Calu3 (cell line): ENCODE measurements at regions of chr18 and their contacts with region 1.

Region 1: GRCh38 chr18:24395049-24395795 is 2.4 kb downstream of the OSBPL1A start:
- DNase-seq: no peak
- H3K4me3 Mint-ChIP-seq: no peak overlapping the region
- H3K27ac Mint-ChIP-seq: no peak overlapping the region
- H3K4me1 Mint-ChIP-seq: no peaks in the 10 kb centered on the region
- H3K27me3 Mint-ChIP-seq: no peaks in the 10 kb centered on the region
- CTCF ChIP-seq: no peak

Region 2: DNA sequence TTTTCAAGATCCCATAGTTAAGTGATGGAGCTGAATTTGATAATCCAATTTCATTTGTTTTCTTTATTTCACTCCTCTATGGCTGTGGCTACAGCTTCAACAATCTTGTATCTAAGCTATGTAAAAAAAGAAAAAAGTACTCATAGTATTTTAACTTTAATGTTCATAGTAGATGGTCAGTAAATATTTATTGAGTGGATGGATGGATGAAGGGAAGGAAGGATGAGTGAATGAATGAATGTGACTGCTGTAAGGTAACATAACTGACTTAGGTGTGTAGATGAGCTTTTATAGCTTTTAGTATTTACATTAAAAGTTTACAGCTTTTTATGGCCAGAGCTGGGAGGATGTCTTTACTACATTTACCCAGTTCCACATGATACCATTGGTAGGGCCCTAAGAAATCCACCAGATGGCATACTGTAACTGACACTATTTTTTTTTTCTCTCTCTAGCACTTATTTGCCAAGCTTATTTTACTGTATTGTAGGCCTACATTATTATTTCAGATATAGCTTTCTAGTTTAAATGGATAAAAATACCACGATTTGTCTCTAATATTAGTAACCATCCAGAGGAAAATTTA is 51.8 kb after region 1 on chr18:
- CTCF ChIA-PET with region 1: no interaction called
- intact Hi-C with region 1: no loop called
- DNase-seq: no peak
- H3K4me3 Mint-ChIP-seq: no peak overlapping the region
- H3K27ac Mint-ChIP-seq: no peak overlapping the region
- H3K4me1 Mint-ChIP-seq: no peaks in the 10 kb centered on the region
- H3K27me3 Mint-ChIP-seq: no peaks in the 10 kb centered on the region
- CTCF ChIP-seq: no peak

Region 3: GRCh38 chr18:25392192-25392591 is 997.0 kb after region 1 on chr18:
- CTCF ChIA-PET with region 1: interaction called, 21 read pairs
- intact Hi-C with region 1: no loop called
- DNase-seq: no peak
- H3K4me3 Mint-ChIP-seq: no peak overlapping the region
- H3K27ac Mint-ChIP-seq: no peak overlapping the region
- H3K4me1 Mint-ChIP-seq: no peaks in the 10 kb centered on the region
- H3K27me3 Mint-ChIP-seq: peaks cover 10% of the 10 kb centered on the region
- CTCF ChIP-seq: no peak